Dorsolateral prefrontal cortex (tissue), 120 donors: ENCODE measurements at regions of chr3 and their contacts with region 1.

Region 1: DNA sequence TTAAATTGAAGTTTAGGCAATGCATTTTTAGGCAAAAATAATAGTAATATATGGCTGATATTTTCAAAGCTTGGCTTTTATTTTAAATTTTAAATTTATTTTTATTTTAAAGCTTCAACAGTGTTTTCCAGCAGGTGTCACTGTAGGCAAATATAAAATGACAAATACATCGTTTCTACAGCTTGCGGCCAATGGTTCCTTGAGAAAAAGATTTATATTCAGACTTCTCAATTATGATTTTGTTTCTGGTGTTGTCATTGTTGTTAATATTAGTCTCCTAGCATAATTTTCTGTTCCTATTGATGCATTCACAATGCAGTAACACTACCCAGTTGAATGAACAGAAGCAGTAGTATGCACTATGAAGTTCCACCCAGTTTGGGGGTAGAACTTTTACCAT is 220.7 kb upstream of the DNAJC19 start:
- DNase-seq: no peak
- H3K4me3 ChIP-seq: peak overlapping the region in 20 of 59 donors; percentile 1 to 48 (median 21)
- H3K27ac ChIP-seq: no peak overlapping the region
- H3K27me3 ChIP-seq: peaks cover 0 to 7% (median 0%) of the 10 kb centered on the region in 45 donors
- CTCF ChIP-seq: peak; percentile 33 to 89 (median 73)

Region 2: GRCh38 chr3:181239441-181239840 is 29.2 kb after region 1 on chr3:
- intact Hi-C with region 1: loop called in 1 of 2 experiments (anchors 2 kb)
- DNase-seq: no peak
- H3K4me3 ChIP-seq: no peak overlapping the region
- H3K27ac ChIP-seq: no peak overlapping the region
- H3K27me3 ChIP-seq: no peaks in the 10 kb centered on the region
- CTCF ChIP-seq: no peak

Region 3: DNA sequence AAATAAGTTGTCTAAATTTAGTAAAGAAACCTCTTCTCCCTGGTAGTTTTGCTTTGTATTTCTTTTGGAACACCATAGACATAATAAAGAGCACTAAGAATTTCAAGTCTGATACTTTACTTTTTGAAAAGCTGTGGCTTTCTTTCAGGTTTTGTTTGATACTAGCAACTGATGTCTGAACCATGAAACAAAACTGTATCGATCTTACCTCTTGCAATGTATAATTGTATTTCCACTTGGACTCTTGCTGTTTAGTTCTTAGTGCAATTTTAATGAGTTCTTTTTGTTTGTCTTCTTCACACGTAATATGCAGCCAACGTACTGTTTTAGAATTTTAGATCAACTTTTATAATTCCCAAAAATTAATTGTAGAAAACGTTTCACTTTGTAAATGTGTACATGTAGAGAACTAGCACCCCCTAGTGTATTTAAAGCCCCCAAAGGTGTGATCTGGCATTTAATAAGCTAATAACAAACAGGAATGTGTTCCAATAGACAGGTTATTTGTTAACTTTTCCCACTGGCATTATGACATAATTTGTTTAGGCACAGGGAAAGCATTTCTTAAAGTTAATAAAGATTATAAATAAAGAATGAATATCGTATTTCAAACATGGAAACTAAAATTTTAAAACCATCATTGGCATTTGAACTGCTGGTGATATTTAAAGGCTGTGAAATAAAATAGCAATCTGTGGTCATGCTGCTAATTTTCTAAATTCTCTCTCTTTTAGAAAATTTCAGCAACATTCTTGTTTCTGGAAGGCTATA is 68.4 kb after region 1 on chr3:
- intact Hi-C with region 1: loop called in 1 of 2 experiments (anchors 5 kb)
- DNase-seq: no peak
- H3K4me3 ChIP-seq: peak overlapping the region in 55 of 59 donors; percentile 1 to 60 (median 34)
- H3K27ac ChIP-seq: no peak overlapping the region
- H3K27me3 ChIP-seq: no peaks in the 10 kb centered on the region
- CTCF ChIP-seq: peak in 53 of 56 donors; percentile 12 to 71 (median 45)

Region 4: GRCh38 chr3:182490596-182491491 is 1280.6 kb after region 1 on chr3:
- intact Hi-C with region 1: loop called in 1 of 2 experiments (anchors 10 kb)
- DNase-seq: no peak
- H3K4me3 ChIP-seq: peak overlapping the region in 4 of 59 donors; percentile 1 to 27 (median 6)
- H3K27ac ChIP-seq: peak overlapping the region in 16 of 59 donors; percentile 4 to 73 (median 36)
- H3K27me3 ChIP-seq: no peaks in the 10 kb centered on the region
- CTCF ChIP-seq: peak; percentile 47 to 82 (median 68)

Region 5: GRCh38 chr3:182683453-182683852 is 1473.2 kb after region 1 on chr3:
- intact Hi-C with region 1: loop called in 1 of 2 experiments (anchors 5 kb)
- DNase-seq: peak in 9 of 10 donors; percentile 35 to 85 (median 63)
- H3K4me3 ChIP-seq: peak overlapping the region in 58 of 59 donors; percentile 21 to 84 (median 72)
- H3K27ac ChIP-seq: peak overlapping the region in 55 of 59 donors; percentile 12 to 86 (median 75)
- H3K27me3 ChIP-seq: peaks cover 0 to 27% (median 2%) of the 10 kb centered on the region in 45 donors
- CTCF ChIP-seq: peak; percentile 76 to 99 (median 93)